Sciatic nerve (tissue), 2 donors: ENCODE measurements at regions of chr9 and their contacts with region 1.

Region 1: DNA sequence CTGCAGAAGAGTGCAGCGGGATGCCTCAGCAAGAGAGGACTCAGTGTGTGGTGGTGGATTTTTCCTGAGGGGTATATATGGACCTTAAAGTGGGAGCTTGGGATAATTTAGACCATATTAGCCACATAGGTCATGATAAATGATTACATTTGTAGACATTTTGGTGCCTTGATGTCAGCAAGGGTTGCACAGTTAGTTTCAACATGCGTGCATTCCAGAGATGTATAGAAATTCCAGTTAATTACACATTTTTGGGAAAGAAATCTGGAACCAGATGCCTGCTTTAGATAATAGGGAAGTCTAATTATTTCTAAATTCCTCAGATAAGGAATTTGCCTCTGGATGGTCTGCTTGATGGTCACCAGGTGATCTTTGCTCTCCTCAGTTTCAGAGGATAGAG is 440.6 kb upstream of the PAPPA start:
- DNase-seq: no peak
- ATAC-seq: no peak

Region 2: GRCh38 chr9:114574438-114574837 is 1138.5 kb before region 1 on chr9:
- intact Hi-C with region 1: loop called (anchors 5 kb)
- DNase-seq: no peak
- ATAC-seq: no peak